AG04450 (cell line): ENCODE measurements at regions of chr12 and their contacts with region 1.

Region 1: DNA sequence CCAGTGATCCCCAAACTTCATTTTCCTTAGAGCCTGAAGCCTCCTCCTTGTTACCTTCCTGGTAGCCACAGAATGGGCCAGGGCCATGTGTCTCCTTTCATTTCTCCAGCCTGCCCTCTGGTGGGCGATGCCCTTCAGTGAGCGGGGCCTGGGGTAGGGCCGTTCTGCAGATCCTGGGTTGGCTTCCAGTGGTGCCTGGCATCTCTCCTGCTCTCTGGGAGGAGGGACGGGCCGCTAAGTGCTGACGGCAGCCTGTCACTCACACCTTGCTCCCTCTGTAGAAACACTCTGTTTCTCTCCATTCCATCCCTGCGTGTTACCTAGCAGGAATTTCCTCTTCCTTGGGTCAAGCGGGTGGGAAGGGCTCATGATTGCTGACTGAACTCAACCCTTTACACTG is 232.1 kb downstream of the CACNA1C start:
- DNase-seq: no peak
- H3K4me3 ChIP-seq: no peak overlapping the region
- H3K27ac ChIP-seq: peak overlapping the region; percentile 96
- H3K27me3 ChIP-seq: no peaks in the 10 kb centered on the region
- CTCF ChIP-seq: peak; percentile 87

Region 2: DNA sequence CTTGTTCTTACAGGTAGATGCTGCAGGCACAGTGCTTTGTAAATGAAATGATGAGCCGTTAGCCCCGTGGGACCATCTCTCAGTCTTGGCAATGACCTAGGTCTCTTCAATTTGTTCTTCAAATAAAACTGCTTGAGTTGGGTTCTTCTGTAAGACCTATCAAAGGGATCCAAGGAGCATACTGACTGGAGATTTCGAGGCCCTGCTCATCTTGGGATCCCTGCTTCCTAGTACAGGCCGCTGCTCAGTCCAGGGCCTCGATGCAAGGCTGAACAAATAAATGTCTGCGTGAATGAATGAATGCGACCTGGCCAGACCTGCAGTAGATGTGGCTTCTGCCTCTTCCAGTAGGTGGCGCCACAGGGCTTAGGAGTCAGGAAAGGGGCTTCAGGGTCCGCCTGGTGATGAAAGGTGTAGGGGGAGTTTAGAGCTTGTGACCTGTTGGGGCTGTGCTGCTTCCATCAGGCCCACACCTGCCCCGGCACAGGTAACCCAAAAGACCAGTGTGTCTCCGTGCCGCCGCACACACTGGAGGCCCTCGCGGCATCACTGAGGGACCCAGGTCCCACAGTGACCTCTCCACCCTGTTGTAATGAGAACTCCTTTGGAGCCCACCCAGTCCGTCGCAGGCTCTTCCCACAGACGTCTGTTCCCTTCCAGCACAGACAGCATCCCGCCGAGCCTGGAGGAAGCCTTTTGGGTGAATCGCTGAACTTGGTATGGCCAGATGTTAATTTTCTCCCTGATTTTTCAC is 227.6 kb before region 1 on chr12:
- CTCF ChIA-PET with region 1: interaction called, 28 read pairs
- POLR2A ChIA-PET with region 1: no interaction called
- DNase-seq: no peak
- H3K4me3 ChIP-seq: no peak overlapping the region
- H3K27ac ChIP-seq: no peak overlapping the region
- H3K27me3 ChIP-seq: no peaks in the 10 kb centered on the region
- CTCF ChIP-seq: peak; percentile 86

Region 3: GRCh38 chr12:2264655-2265232 is 20.1 kb before region 1 on chr12:
- CTCF ChIA-PET with region 1: interaction called, 9 read pairs
- POLR2A ChIA-PET with region 1: interaction called, 20 read pairs
- DNase-seq: peak; percentile 92
- H3K4me3 ChIP-seq: no peak overlapping the region
- H3K27ac ChIP-seq: peak overlapping the region; percentile 92
- H3K27me3 ChIP-seq: no peaks in the 10 kb centered on the region
- CTCF ChIP-seq: no peak

Region 4: DNA sequence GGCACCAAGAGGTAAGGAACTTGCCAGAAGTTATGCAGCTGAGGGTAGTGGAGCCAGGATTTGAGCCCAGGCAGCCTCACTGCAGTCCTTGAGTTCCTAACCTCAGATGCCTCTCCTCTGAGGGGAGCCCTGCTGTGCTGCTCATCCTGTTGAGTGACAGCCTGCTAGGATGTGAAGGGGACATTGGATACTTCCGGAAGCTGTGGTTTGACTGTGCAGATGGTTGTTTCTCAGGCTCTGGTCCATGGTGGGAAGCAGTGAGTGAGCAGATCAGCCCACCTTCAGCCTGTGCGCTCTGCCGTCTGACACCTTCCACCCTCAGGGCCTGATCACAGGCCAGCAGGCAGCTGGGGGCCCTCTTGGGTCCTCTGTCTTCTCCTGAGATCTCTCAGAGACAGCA is 21.2 kb after region 1 on chr12:
- CTCF ChIA-PET with region 1: no interaction called
- POLR2A ChIA-PET with region 1: no interaction called
- DNase-seq: no peak
- H3K4me3 ChIP-seq: no peak overlapping the region
- H3K27ac ChIP-seq: no peak overlapping the region
- H3K27me3 ChIP-seq: no peaks in the 10 kb centered on the region
- CTCF ChIP-seq: no peak